GM10248 (cell line): ENCODE measurements at regions of chr7 and their contacts with region 1.

Region 1: GRCh38 chr7:22872096-22872807 is 49.6 kb upstream of the TOMM7 start:
- DNase-seq: peak; percentile 77
- CTCF ChIP-seq: no peak

Region 2: DNA sequence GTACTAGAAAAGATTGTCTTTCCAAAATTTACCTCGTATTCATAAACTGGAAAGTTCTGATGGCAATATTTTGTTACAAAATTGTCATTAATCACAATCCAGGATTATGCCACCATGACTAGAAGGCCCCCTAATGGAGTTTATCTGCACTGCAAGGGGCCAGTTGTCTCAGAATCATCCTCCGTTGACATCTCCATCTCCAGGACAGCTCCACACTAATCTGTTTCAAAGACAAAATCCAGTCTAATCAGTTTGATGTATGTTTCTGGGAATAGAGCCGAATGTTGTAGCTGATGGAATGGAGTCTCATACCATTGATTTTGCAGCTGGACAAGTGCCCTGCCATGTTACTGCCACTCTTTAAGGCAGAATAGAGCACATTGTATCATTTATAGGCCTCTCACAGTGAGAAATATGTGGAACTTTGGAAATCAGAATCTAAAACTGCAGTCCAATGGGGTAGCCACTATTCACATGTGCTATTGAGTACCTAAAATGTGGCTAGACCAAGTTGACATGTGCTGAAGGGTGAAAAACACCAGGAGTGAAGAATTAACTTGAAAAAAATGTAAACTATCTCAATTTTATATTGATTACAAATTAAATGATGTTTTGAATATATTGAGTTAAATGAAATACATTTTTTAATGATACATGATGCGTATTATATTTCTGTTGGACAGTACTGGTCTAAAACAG is 11.3 kb before region 1 on chr7:
- CTCF ChIA-PET with region 1: interaction called, 24 read pairs
- POLR2A ChIA-PET with region 1: interaction called, 5 read pairs
- DNase-seq: no peak
- CTCF ChIP-seq: peak; percentile 21